ENCODE measurements at regions of chr7 and their contacts with region 1.

Region 1: DNA sequence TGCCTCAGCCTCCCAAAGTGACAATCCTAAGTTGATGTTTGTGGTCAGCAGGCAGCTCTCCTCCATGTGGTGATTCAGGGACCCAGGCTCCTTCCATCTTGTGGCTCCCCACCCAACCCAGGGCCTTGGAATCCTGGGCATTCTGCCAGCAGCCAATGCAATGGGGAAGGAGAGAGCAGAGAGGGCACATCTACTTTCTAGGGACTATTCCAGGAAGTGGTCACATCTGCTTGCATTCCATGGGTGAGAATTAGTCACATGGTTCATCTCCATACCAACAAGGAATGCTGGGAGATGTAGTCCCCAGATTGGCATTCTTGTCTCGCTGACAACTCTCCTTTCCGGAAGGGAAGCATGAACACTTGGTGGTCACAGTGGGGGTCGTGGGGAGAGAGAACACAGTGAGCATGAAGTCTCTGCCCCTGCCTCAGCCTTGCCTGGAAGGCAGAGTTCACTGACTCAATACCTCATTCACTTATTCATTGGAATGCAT is 9.9 kb upstream of the SRRM3 start:
- ATAC-seq: peak in 6 of 8 experiments; percentile 26 to 48 (median 38)
- H3K4me3 ChIP-seq: no peak overlapping the region
- H3K27ac ChIP-seq: no peak overlapping the region
- H3K4me1 ChIP-seq: peaks cover 16 to 24% of the 10 kb centered on the region in 2 donors

Region 2: DNA sequence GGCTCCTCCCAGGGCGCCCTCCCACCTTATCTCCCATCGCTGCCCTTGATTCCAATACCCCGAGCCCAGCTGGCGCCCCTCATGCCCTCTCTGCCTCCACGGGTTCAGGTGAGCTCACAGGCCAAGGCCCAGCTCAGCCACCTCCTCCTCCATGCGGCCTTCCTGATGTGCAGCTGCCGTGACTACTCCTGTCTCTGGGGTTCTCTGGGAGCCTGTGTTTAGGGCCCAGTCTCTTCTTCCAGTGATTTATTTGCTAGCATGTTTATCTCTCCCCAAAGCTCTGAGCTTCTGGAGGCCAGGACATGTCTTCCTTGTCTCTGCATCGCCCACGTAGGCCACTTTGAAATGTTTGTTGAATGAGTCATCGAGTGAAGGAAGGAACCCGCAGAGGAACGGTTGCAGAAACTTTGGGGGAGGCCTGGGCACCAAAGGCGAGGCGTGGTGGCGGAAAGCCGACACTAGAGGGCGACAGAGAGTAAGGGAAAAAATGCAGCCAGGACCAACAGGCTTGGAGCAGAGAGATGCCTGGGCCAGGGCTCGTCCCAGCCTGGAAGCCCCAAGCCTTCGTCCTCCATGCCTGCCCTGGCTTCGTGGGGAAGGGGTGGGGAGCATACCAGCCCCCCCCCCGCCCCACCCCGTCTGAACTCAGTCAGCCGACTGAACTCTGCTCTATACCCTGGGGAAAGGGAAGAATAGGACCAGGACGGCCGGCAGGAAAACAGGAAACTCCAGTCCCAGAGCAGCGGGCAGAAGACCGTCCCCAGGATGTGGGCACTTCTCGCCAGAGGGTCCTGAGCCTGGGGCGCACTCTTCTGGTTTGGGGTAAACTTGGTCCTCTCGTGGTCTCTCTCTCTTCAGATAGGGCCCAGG is 99.7 kb after region 1 on chr7:
- in situ Hi-C with region 1: loop called in 1 of 9 experiments (anchors 25 kb)
- ATAC-seq: peak; percentile 59 to 84 (median 64)
- H3K4me3 ChIP-seq: no peak overlapping the region
- H3K27ac ChIP-seq: peak overlapping the region in 1 of 2 donors; percentile 42
- H3K4me1 ChIP-seq: peaks cover 16 to 33% of the 10 kb centered on the region in 2 donors

Region 3: DNA sequence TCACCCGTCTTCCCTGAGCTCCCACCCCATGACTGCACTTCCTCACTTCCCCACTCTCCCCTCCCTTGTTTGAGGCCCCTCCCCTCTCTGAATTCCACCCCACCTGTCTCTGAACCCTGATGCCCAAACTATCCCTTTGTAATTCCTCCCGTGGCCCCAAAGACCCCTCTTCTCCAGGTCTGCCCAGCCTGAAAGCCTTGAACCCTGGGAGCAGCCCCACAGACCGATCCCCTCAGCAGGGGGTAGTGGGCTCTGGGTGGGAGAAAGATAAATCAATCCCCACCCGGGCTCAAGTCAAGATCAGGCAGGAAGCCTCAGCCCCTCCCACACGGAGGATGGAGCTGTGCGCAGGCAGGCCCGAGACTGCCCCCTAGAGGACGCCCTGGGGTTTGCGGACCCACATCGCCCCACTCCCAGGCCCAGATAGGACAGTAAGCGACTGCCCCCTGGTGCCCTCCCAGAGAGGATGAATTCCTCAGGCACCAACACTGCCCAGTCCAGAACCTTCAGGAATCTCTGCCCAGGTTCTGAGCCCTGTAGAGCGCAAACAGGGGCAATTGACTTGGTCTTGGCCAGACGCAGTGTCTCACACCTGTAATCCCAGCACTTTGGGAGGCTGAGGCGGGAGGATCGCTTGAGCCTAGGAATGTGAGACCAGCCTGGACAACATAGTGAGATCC is 122.4 kb after region 1 on chr7:
- in situ Hi-C with region 1: loop called in 1 of 9 experiments (anchors 25 kb)
- ATAC-seq: peak; percentile 11 to 50 (median 24)
- H3K4me3 ChIP-seq: no peak overlapping the region
- H3K27ac ChIP-seq: no peak overlapping the region
- H3K4me1 ChIP-seq: peaks cover 11 to 21% of the 10 kb centered on the region in 2 donors

Measured in motor neuron (in vitro differentiated cells).